H1 (cell line): ENCODE measurements at regions of chr19 and their contacts with region 1.

Region 1: DNA sequence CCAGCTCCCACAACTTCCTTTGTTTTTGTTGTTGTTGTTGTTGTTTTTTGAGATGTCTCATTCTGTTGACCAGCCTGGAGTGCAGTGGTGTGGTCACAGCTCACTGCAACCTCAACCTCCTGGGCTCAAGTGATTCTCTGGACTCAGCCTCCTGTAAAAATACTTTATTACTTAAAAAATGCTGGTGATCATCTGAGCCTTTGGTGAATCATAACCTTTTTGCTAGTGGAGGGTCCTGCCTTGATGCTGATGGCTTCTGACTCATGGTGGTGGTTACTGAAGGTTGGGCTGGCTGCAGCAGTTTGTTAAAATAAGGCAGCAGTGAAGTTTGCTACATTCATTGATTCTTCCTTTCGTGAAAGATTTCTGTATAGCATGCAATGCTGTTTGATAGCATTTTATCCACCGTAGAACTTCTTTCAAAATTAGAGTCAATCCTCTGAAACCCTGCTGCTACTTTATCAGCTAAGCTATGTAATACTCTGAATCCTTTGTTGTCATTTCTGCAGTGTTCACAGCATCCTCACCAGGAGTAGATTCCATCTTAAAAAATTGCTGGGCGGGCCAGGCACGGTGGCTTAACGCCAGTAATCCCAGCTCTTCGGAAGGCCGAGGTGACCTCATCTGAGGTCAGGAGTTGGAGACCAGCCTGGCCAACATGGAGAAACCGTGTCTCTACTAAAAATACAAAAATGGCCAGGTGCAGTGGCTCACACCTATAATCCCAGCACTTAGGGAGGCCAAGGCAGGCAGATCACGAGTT is 18.0 kb downstream of the ARHGAP35 start:
- DNase-seq: no peak
- H3K4me3 ChIP-seq: no peak overlapping the region
- H3K27ac ChIP-seq: no peak overlapping the region
- H3K4me1 ChIP-seq: peaks cover 0 to 3% (median 1%) of the 10 kb centered on the region in 4 experiments; a peak in 2 of 7 replicates
- H3K27me3 ChIP-seq: no peaks in the 10 kb centered on the region
- CTCF ChIP-seq: no peak
- EP300 ChIP-seq: no peak
- POLR2A ChIP-seq: no peak
- RAD21 ChIP-seq: no peak

Region 2: GRCh38 chr19:46860125-46860845 is 18.5 kb before region 1 on chr19:
- CTCF ChIA-PET with region 1: no interaction called
- POLR2A ChIA-PET with region 1: interaction called, 102 read pairs
- DNase-seq: peak; percentile 95
- H3K4me3 ChIP-seq: peak overlapping the region; percentile 74 to 88 (median 84)
- H3K27ac ChIP-seq: peak overlapping the region; percentile 95
- H3K4me1 ChIP-seq: peaks cover 4 to 16% (median 8%) of the 10 kb centered on the region in 4 experiments
- H3K27me3 ChIP-seq: peaks cover 0 to 1% (median under 1%) of the 10 kb centered on the region in 4 experiments; a peak in 1 of 7 replicates
- CTCF ChIP-seq: no peak
- EP300 ChIP-seq: no peak
- POLR2A ChIP-seq: peak; percentile 74 to 81
- RAD21 ChIP-seq: no peak

Region 3: DNA sequence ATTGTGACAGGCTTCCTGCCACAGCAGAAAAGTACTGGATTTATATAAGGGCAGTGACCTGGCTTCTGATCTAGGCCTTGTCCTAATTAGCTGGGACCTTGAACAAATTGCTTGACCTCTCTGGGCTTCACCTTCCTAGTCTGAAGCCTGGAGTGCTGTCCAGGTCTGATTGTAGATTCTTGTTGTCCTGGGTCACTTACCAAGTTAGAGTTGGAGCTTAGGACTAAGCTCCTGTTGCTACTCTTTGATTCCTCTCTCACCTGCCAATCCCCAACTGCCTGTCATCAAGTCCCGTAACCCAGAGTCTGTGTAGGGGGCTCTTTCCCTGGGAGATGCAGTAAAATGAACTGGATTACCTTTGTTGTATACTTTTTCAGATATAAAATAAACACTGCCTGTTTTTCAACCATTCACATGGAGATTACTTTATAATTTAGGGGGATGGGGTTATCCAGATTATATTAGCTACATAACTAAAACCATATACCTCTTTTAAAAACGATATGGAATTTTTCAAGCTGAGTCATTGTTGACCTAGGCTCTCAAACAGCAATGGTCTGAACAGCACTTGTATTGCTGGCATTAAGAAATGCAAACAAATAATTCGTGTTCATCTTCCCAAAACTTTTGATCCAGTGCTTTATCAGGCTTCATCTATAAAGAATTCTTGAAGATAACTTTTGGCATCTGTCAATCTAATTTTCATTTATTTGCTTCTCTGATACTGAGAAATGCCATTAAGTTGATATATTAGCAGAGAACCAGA is 12.2 kb before region 1 on chr19:
- CTCF ChIA-PET with region 1: interaction called, 4 read pairs
- POLR2A ChIA-PET with region 1: interaction called, 102 read pairs
- DNase-seq: no peak
- H3K4me3 ChIP-seq: no peak overlapping the region
- H3K27ac ChIP-seq: no peak overlapping the region
- H3K4me1 ChIP-seq: peaks cover 6 to 23% (median 10%) of the 10 kb centered on the region in 4 experiments; a peak in 6 of 7 replicates
- H3K27me3 ChIP-seq: no peaks in the 10 kb centered on the region
- CTCF ChIP-seq: no peak
- EP300 ChIP-seq: no peak
- POLR2A ChIP-seq: no peak
- RAD21 ChIP-seq: no peak

Region 4: DNA sequence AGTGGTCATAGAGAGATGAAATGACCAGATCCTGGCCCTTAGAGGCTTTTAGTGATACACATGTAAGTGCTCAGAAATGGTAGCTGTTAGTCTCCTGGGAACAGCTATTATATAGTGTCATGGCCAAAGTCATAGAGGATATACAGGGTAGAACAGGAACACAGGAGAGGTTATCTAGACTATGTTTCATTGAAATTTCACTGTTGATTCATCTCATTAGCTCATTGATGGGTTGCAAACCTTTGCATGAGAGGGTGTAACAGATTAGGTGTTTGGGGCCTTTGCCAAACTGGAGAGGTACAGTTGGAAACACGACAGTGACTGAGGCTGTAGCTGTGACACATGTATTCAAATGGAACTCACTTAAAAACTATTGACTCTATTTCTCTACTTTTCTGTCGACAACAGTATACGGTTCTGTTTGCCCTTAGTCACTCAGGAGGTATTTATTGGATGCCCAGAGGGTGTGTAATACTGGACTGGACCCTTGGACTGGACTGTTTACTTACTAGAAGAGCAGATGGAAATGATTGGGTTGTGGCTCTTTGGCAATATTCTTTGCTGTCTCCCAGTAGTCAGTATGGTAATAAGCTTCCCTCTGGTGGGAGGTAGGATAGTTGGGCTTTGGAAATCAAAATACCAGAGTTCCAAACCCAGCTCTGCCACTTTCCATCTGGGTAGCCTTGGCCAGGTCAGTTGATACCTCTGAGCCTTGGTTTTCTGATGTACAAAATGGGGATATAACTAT is 11.8 kb after region 1 on chr19:
- CTCF ChIA-PET with region 1: no interaction called
- POLR2A ChIA-PET with region 1: interaction called, 14 read pairs
- DNase-seq: no peak
- H3K4me3 ChIP-seq: no peak overlapping the region
- H3K27ac ChIP-seq: no peak overlapping the region
- H3K4me1 ChIP-seq: peaks cover 0 to 6% (median 1%) of the 10 kb centered on the region in 4 experiments; a peak in 2 of 7 replicates
- H3K27me3 ChIP-seq: no peaks in the 10 kb centered on the region
- CTCF ChIP-seq: no peak
- EP300 ChIP-seq: no peak
- POLR2A ChIP-seq: no peak
- RAD21 ChIP-seq: no peak